ENCODE measurements at regions of chr9 and their contacts with region 1.

Region 1: GRCh38 chr9:97615439-97616072 is 17.6 kb downstream of the TSTD2 start:
- H3K4me3 ChIP-seq: no peak overlapping the region
- H3K27ac ChIP-seq: no peak overlapping the region
- H3K4me1 ChIP-seq: no peaks in the 10 kb centered on the region
- CTCF ChIP-seq: 0 out of 2 replicates have a peak, but pooled peaks have one; percentile 43

Region 2: GRCh38 chr9:96854073-96854876 is 761.3 kb before region 1 on chr9 and contains the start of gene ZNF782:
- CTCF ChIA-PET with region 1: interaction called, 28 read pairs
- POLR2A ChIA-PET with region 1: no interaction called
- H3K4me3 ChIP-seq: peak within 1 kb of the TSS; percentile 84
- H3K27ac ChIP-seq: peak within 1 kb of the TSS; percentile 53; the same call in 1 of the 2 replicates
- H3K4me1 ChIP-seq: no peaks in the 10 kb centered on the region
- CTCF ChIP-seq: 0 out of 2 replicates have a peak, but pooled peaks have one; percentile 16

Region 3: DNA sequence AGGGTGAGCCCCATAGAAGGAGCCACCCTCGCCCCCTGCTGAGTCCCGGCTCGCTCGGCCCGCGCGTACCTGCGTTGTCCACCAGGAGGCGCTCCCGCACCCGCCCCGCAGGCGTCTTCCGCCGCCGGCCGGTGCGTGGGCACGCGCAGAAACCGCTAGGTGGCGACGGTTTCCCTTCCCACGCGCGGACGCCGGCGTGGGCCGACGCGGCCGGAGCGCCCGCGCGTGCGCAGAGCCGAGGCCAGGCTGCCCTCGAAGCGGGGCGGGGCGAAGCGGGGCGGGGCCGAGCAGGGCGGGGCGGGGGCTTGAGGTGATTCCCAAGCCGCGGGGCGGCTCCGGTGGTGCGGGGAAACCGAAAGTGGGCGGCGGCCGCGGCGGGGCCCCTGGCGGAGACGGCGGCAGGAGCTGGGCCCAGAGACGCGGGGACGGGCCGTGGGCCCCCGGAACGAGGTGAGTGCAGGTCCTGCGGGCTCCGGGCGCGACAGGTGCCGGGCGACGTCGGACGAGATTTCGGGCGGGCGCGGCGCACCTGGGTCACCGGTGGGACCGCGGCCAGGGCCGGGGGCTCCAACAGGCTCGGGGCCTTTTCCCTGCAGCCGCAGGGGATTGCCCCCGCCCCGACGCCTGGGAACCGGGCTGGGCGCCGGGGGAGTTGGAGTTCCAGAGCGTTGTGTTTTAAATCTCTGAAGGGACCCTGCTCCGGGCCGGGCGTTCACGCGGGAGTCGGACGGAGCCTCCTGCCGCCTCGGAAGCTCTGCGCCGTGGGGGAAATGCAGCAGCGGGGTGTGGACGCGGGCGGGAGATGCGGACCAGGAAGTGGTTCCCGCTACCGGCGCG is 203.5 kb before region 1 on chr9 and contains the start of gene TDRD7:
- CTCF ChIA-PET with region 1: interaction called, 20 read pairs
- POLR2A ChIA-PET with region 1: no interaction called
- H3K4me3 ChIP-seq: peak within 1 kb of the TSS; percentile 81
- H3K27ac ChIP-seq: peak within 1 kb of the TSS; percentile 53; the same call in 1 of the 2 replicates
- H3K4me1 ChIP-seq: no peaks in the 10 kb centered on the region
- CTCF ChIP-seq: peak; percentile 79

Region 4: DNA sequence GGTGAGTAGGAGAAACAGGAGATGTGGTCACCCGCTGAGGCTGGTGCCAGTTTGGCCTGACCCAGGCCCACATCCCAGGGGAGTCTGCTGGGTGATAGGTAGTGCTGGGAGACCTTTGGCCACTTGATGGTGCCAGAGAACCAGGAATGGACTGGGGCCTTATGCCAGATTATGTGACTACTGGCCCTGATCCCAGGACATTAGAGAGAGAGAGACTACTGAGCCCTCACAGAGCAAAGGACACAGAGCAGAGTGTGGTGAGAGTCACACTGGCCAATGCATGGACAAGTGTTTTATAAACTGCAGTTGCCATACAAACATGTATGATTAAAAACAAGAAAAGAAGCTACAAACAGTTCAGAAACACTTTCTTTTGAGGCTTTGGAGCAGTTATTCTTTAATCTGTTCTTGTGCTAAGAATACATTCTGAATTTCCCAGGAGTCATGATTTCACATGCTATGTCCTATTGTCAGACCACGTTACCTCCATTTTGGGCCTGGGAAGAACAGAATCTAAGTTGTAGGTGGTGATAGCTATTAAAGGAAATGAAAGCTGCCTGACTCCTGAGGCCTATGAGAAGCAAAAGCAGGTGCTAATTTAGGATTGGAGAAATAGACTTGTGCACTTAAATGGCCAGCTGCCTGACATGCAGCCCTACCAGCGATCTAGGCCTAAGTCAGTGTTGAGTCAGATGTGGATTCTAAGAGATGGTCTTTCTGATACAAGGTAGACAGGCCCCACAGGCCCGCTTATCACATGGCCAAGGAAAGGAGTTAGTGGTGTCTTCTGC is 146.7 kb before region 1 on chr9:
- CTCF ChIA-PET with region 1: interaction called, 255 read pairs
- POLR2A ChIA-PET with region 1: no interaction called
- H3K4me3 ChIP-seq: no peak overlapping the region
- H3K27ac ChIP-seq: no peak overlapping the region
- H3K4me1 ChIP-seq: no peaks in the 10 kb centered on the region
- CTCF ChIP-seq: peak; percentile 70

Region 5: GRCh38 chr9:97632985-97633858 is 17.7 kb after region 1 on chr9 and contains the starts of genes NCBP1 and TSTD2:
- CTCF ChIA-PET with region 1: interaction called, 28 read pairs
- POLR2A ChIA-PET with region 1: interaction called, 3 read pairs
- H3K4me3 ChIP-seq: peak within 1 kb of the TSS; percentile 97
- H3K27ac ChIP-seq: peak within 1 kb of the TSS; percentile 92
- H3K4me1 ChIP-seq: no peaks in the 10 kb centered on the region; the same call in 1 of the 2 replicates
- CTCF ChIP-seq: no peak; the same call in 1 of the 2 replicates

Region 6: DNA sequence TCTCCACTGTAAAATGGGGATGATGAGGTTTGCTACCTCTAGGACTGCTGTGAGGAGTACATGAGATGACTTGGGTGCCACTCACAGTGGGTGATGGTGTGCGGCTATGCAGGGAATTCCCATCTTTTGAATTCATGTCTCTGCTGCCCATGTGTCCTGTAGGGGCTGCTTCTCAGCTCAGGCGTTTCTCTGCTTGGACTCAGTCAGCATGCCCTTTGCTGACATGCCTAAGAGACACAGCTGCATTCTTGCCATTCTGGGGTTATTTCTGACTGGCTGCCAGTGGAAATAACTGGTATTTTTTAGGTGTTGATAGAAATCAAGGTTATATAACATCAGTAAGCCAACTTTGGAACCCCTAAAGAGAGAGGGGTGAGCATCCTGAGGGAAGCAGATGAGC is 105.8 kb after region 1 on chr9:
- CTCF ChIA-PET with region 1: no interaction called
- POLR2A ChIA-PET with region 1: no interaction called
- H3K4me3 ChIP-seq: no peak overlapping the region
- H3K27ac ChIP-seq: no peak overlapping the region
- H3K4me1 ChIP-seq: no peaks in the 10 kb centered on the region
- CTCF ChIP-seq: no peak

Measured in HEK293 (cell line).